ENCODE measurements at regions of chr1 and their contacts with region 1.

Region 1: GRCh38 chr1:30713311-30713710 is 10.1 kb downstream of the MATN1 start:
- DNase-seq: no peak
- H3K4me3 ChIP-seq: no peak overlapping the region
- H3K27ac ChIP-seq: no peak overlapping the region
- H3K4me1 ChIP-seq: peaks cover 0 to 4% (median 0%) of the 10 kb centered on the region in 4 donors
- H3K27me3 ChIP-seq: peaks cover 0 to 6% of the 10 kb centered on the region in 2 donors
- CTCF ChIP-seq: no peak

Region 2: DNA sequence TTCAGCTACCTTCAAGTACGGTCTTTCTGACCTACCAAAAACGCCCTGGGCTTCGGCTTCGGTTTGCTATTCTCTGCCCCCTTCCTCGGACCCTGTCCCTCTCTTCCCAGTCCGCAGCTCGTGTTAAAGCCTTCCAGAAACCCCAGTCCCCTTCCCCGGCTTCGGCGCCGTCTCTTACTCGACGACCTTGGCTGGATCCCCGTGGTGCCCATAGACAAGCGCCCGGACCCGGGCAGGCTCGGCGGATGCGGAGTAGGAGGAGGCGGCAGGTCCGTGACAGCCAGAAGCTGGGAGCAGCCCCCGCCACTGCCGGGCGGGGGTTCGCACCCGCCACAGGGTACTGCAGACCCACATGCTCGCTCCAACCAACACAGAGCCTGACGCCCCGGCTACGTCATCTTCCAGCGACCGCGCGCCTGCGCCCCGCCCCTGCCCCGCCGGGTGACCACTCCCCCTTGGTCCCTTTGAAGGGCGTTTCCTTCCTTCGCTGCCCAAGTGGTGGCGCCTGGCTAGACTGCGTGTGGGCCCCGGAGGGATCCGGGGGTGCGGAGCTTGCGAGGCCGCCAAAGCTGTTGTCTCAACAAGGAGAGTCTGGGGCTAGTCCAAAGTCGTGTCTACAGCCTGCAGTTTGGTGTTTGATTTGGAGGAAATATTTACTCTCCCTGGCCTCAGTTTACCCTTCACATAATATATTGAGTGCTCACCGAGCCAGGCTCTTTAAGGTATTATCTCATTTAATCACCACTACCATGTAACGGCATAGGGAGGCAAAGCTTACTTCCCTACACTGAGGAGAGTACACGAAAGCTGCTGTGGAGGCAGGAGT is 1482.5 kb before region 1 on chr1 and contains the start of gene MECR:
- intact Hi-C with region 1: loop called (anchors 5 kb)
- DNase-seq: peak; percentile 88 to 96
- H3K4me3 ChIP-seq: peak within 1 kb of the TSS; percentile 65 to 81
- H3K27ac ChIP-seq: peak within 1 kb of the TSS; percentile 69 to 71
- H3K4me1 ChIP-seq: peaks cover 0 to 22% (median 13%) of the 10 kb centered on the region in 4 donors
- H3K27me3 ChIP-seq: no peaks in the 10 kb centered on the region
- CTCF ChIP-seq: peak in 1 of 2 experiments; percentile 16

Measured in tibial artery (tissue), 4 donors.